ENCODE measurements at regions of chr12 and their contacts with region 1.

Region 1: DNA sequence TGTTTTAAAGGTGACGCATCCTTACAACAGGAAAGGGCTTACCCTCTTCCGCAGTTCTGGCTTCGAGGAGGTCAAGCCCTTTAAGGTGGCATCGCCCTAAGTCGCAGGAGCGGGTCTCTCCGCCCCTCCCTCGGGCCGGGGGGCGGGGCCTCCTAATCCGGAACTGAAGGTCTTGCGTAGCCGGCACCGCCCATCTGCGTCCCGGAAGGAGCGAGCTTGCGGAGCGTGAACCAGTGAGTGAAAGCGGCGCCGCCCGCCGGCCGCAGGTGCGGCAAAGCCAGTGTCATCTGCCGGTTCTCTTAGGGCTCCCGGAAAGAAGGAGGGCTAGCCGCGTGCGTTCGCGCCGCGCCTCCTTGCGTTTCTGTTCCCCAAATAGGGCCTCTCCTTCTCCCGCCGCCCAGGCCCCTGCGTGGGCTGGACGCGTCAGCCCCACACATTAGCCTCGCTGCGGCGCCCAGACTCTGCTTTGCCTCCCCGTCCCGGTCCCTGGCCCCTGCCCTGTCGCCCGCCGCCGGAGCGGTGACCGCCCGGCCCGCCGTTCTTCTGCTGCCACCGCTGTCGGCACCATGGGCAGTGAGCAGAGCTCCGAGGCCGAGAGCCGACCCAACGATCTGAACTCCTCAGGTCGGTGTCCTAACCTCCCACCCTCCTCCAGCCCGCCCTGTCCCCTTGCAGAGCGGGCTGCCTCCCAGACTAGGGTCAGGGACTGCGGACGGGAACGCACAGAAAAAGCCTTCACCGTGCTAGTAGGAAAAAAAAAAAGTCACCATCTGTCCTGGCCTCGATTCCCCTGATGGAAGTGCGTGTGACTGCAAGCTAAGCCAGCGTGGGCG is at the start of gene BORCS5:
- DNase-seq: peak; percentile 97 to 99 (median 98)
- ATAC-seq: peak; percentile 90 to 96 (median 91)
- H3K4me3 ChIP-seq: peak within 1 kb of the TSS; percentile 59 to 73
- H3K4me3 Mint-ChIP-seq: peak within 1 kb of the TSS; percentile 87 to 96 (median 93)
- H3K27ac ChIP-seq: peak within 1 kb of the TSS; percentile 90
- H3K27ac Mint-ChIP-seq: peak within 1 kb of the TSS; percentile 94 to 96
- H3K4me1 ChIP-seq: peaks cover 13 to 36% of the 10 kb centered on the region in 2 experiments
- H3K4me1 Mint-ChIP-seq: peaks cover 50 to 58% (median 54%) of the 10 kb centered on the region in 3 donors
- H3K27me3 ChIP-seq: no peaks in the 10 kb centered on the region
- H3K27me3 Mint-ChIP-seq: no peaks in the 10 kb centered on the region
- total RNA-seq, gene BORCS5: 18.0 to 34.0 (median 25.5) TPM

Region 2: GRCh38 chr12:12562585-12563261 is 205.6 kb after region 1 on chr12 and contains the start of gene DUSP16:
- CTCF ChIA-PET with region 1: interaction called in 1 of 2 experiments, 11 read pairs
- POLR2A ChIA-PET with region 1: interaction called in 1 of 2 experiments, 11 read pairs
- DNase-seq: peak; percentile 55 to 92 (median 77)
- ATAC-seq: peak; percentile 66 to 80 (median 69)
- H3K4me3 ChIP-seq: peak within 1 kb of the TSS; percentile 90 to 93
- H3K4me3 Mint-ChIP-seq: peak within 1 kb of the TSS; percentile 83 to 89 (median 85)
- H3K27ac ChIP-seq: peak within 1 kb of the TSS; percentile 100
- H3K27ac Mint-ChIP-seq: peak within 1 kb of the TSS; percentile 92 to 93
- H3K4me1 ChIP-seq: peaks cover 8 to 18% of the 10 kb centered on the region in 2 experiments
- H3K4me1 Mint-ChIP-seq: peaks cover 37 to 46% (median 40%) of the 10 kb centered on the region in 3 donors
- H3K27me3 ChIP-seq: no peaks in the 10 kb centered on the region
- H3K27me3 Mint-ChIP-seq: no peaks in the 10 kb centered on the region
- total RNA-seq, gene DUSP16: 44.6 to 72.3 (median 61.0) TPM

Region 3: DNA sequence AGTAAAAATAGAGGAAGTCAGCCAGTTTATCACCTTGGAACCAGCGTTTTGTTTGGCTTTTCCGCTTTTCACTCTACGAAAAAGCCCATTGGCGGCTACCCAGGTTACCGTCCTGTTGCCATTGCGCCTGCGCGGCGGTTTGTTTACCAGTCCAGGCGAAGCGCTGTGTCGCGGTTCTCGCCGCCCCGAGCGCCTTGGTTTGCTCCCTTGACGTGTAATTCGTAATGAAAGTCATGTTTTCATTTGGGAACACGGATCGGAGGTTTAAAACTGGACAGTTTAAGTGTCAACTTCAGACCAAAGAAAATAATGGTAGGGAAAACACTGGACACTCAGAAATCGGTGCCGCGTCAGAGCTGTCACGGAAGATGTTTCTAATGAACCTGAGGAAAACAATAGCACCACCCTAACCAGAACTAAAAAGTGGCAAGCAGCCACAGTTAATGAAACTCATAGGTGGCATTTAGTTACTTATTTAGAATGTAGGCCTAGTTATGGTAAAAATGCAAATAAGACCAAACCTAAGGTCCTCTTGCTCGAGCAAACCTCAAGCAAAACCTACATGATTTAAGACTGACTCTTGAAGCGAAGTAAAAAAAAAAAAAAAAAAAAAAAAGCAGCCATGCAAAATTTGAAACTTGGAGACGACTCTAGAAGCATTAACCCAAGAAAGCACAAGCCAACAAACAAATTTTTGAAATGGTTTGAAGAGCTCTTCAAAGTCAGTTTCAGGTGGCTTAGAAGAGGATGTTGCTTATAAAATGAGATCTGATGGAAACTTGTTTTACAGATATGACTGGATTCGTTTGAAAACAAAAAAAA is 339.7 kb after region 1 on chr12:
- CTCF ChIA-PET with region 1: interaction called in 1 of 2 experiments, 4 read pairs
- POLR2A ChIA-PET with region 1: interaction called in 1 of 2 experiments, 25 read pairs
- DNase-seq: peak; percentile 88 to 95 (median 92)
- ATAC-seq: peak; percentile 88 to 92 (median 90)
- H3K4me3 ChIP-seq: peak overlapping the region; percentile 57 to 66
- H3K4me3 Mint-ChIP-seq: peak overlapping the region; percentile 87 to 93 (median 93)
- H3K27ac ChIP-seq: peak overlapping the region; percentile 98
- H3K27ac Mint-ChIP-seq: peak overlapping the region; percentile 99 to 100
- H3K4me1 ChIP-seq: peaks cover 9 to 10% of the 10 kb centered on the region in 2 experiments
- H3K4me1 Mint-ChIP-seq: peaks cover 31 to 37% (median 32%) of the 10 kb centered on the region in 3 donors
- H3K27me3 ChIP-seq: no peaks in the 10 kb centered on the region
- H3K27me3 Mint-ChIP-seq: no peaks in the 10 kb centered on the region

Region 4: GRCh38 chr12:12716793-12717585 is 359.9 kb after region 1 on chr12 and contains the start of gene CDKN1B:
- CTCF ChIA-PET with region 1: interaction called in 1 of 2 experiments, 4 read pairs
- POLR2A ChIA-PET with region 1: interaction called, 6 to 11 read pairs
- DNase-seq: peak; percentile 78 to 93 (median 87)
- ATAC-seq: peak; percentile 72 to 77 (median 73)
- H3K4me3 ChIP-seq: peak within 1 kb of the TSS; percentile 94 to 100
- H3K4me3 Mint-ChIP-seq: peak within 1 kb of the TSS; percentile 93 to 99 (median 99)
- H3K27ac ChIP-seq: peak within 1 kb of the TSS; percentile 97
- H3K27ac Mint-ChIP-seq: peak within 1 kb of the TSS; percentile 99 to 100
- H3K4me1 ChIP-seq: peaks cover 38 to 39% of the 10 kb centered on the region in 2 experiments
- H3K4me1 Mint-ChIP-seq: peaks cover 43 to 69% (median 58%) of the 10 kb centered on the region in 3 donors
- H3K27me3 ChIP-seq: no peaks in the 10 kb centered on the region
- H3K27me3 Mint-ChIP-seq: no peaks in the 10 kb centered on the region
- total RNA-seq, gene CDKN1B: 170 to 246 (median 188) TPM

Region 5: DNA sequence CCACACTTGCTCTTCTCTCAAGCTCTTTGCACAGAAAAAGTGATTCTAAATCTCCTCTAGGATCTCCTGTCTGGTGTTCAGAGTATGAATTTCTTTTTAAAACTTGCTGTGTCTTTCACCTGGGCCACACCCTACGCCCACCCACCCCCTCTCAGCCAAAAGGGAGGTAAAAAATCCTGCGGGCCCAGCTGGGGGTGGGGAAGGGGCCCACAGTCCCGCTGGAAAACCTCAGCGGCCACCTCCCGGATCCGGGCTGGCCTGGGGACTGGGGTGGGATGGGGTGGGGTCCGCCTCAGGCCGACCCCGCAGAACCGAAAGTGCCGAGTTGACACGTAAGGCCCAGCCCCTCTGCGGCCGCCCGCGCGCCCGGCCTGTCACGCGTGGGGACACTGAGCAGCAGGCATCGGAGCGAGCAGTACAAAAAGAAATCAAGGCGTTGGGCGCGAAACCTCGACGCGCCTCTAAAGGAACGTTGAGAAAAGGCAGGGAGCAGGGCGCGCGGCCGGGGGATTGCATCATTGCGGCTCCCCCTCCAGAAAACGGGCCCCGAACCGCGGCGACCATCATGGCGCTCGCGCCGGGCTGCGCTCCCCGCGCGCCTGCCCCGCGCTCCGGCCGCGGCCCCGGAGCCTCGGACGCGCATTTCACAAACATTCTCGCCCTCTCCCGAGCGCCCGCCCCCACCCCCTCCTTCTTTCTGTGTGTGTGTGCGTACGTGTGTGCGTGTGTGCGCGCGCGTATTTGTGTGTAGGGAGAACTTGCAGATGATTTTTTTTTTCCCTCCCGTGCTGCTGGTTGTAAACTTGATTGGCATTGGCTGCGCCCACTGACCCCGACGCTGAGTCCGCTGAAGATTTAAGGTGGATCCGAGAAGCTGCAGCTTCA is 367.8 kb after region 1 on chr12:
- CTCF ChIA-PET with region 1: interaction called in 1 of 2 experiments, 4 read pairs
- POLR2A ChIA-PET with region 1: interaction called in 1 of 2 experiments, 12 read pairs
- DNase-seq: peak in 34 of 35 experiments; percentile 79 to 96 (median 88)
- ATAC-seq: peak; percentile 59 to 69 (median 62)
- H3K4me3 ChIP-seq: peak overlapping the region; percentile 65 to 81
- H3K4me3 Mint-ChIP-seq: peak overlapping the region; percentile 87 to 100 (median 99)
- H3K27ac ChIP-seq: peak overlapping the region; percentile 97
- H3K27ac Mint-ChIP-seq: peak overlapping the region; percentile 98 to 99
- H3K4me1 ChIP-seq: peaks cover 39% of the 10 kb centered on the region in 2 experiments
- H3K4me1 Mint-ChIP-seq: peaks cover 51 to 62% (median 58%) of the 10 kb centered on the region in 3 donors
- H3K27me3 ChIP-seq: no peaks in the 10 kb centered on the region
- H3K27me3 Mint-ChIP-seq: no peaks in the 10 kb centered on the region